ENCODE measurements at regions of chr3 and their contacts with region 1.

Region 1: DNA sequence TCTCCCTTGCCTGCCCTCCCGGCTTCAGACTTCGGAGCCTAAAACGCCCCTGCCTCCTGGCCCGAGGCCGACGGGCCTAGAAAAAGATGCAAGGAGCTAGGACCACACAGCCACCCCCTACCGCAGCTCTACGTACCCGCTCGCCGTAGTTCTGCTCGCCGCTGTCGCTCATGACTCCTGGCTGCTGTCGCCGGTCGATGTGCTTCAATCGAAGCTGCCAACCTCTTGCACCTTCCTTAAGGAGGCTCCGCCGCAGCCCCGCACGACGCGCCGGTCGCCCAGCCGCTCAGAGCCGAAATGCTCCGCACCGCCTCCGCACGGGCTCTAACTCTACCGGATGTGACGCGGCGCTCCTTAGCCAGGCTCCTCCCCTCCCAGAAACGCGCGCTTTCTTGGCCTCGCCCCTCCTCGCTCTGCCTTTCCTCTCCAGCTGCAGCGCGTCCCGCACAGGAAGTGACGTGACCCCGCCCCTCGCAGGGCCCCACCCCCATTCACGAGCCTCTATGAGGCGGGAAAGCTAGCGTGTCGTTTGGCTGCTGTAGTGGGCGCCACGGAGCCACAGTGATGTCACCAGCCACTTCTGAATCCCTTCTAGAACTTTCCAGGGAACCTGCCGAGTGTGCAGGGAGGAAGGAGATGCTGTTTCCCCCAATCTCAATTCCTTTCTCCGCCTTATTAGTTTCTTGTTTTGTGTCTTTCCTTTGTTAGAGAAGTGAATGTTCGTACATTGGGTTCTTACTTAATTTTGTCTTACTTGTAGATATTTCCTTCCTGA is at the start of gene TRA2B:
- DNase-seq: peak; percentile 91
- ATAC-seq: peak; percentile 96
- H3K4me3 ChIP-seq: peak within 1 kb of the TSS; percentile 79 to 94
- H3K27ac ChIP-seq: peak within 1 kb of the TSS; percentile 99
- H3K4me1 ChIP-seq: peaks cover 14% of the 10 kb centered on the region
- H3K27me3 ChIP-seq: no peaks in the 10 kb centered on the region
- CTCF ChIP-seq: peak; percentile 47
- total RNA-seq, gene TRA2B: 171 TPM

Region 2: DNA sequence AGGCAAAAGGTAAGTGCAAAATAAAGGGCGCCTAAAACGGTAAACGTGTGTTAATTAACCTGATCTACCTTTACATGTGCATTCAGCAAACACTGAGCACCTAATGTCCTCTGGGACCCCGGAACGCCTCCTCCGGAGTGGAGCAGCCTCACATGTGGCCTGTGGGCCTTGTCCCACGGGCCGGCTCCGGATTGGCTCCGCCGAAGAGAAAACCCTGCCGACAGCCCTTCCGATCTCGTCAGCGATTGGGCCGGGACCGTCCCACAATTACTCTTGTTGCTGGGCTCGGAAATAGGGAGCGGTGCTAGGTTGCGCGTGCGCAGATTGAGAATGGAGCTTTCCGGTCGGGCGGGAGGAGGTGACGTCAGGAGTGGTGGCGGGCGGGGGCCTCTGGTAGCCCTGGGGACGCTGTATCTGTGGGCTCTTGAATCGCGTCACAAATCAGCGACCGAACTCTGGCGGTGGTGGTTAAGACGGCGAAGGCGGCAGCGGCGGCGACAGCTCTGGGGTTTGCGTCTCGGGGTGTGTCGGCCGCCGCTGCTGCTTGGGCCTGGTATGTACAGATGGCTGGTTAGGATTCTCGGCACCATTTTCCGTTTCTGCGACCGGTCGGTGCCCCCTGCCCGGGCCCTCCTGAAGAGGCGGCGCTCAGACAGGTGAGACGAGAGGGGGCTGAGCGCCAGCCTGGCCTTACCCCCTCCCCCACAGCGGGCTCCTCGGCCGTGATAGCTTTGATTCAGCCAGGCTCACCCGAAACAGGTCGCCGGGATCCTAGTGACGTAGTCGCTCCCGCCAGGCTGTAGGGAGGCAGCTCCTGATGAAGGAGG is 351.8 kb before region 1 on chr3 and contains the start of gene SENP2:
- CTCF ChIA-PET with region 1: no interaction called
- POLR2A ChIA-PET with region 1: no interaction called
- in situ Hi-C with region 1: no loop called
- intact Hi-C with region 1: no loop called
- DNase-seq: peak; percentile 98
- ATAC-seq: peak; percentile 100
- H3K4me3 ChIP-seq: peak within 1 kb of the TSS; percentile 85 to 86
- H3K27ac ChIP-seq: peak within 1 kb of the TSS; percentile 82
- H3K4me1 ChIP-seq: peaks cover 4% of the 10 kb centered on the region; the same call in 1 of the 2 replicates
- H3K27me3 ChIP-seq: no peaks in the 10 kb centered on the region
- CTCF ChIP-seq: no peak
- total RNA-seq, gene SENP2: 52.7 TPM

Region 3: GRCh38 chr3:185796431-185797107 is 141.3 kb before region 1 on chr3:
- CTCF ChIA-PET with region 1: no interaction called
- POLR2A ChIA-PET with region 1: interaction called, 11 read pairs
- in situ Hi-C with region 1: no loop called
- intact Hi-C with region 1: no loop called
- DNase-seq: peak; percentile 94
- ATAC-seq: peak; percentile 97
- H3K4me3 ChIP-seq: peak overlapping the region in 1 of 2 experiments; percentile 6; a peak in 1 of 4 replicates
- H3K27ac ChIP-seq: peak overlapping the region; percentile 70; the same call in 1 of the 2 replicates
- H3K4me1 ChIP-seq: peaks cover 49% of the 10 kb centered on the region
- H3K27me3 ChIP-seq: no peaks in the 10 kb centered on the region
- CTCF ChIP-seq: no peak

Region 4: DNA sequence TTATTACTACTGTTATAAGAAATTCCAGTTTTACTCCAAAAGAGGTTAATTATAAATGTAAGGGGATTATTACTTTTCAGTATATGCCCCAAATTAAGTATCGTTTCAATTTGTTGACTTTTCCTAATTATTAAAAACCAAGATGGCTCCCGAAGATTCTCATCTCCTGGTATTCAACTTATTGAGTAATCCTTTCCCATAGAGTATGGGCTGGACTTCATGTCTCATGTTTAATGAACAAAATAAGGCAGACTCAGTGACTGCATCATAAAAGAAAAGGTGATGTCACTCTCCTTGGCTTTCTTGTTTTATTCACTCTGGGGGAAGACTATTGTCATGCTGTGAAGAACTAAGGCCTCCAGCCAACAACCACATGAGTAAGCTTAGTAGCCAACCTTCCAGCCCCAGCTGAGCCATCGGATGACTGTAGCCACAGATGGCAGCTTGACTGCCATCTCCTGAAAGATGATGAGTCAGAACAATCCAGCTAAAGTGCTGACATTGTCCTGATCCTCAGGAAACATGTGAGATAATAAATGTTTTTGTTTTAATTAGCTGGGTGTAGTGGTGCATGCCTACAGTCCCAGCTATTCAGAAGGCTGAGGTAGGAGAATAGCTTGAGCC is 130.3 kb before region 1 on chr3:
- CTCF ChIA-PET with region 1: interaction called, 3 read pairs
- POLR2A ChIA-PET with region 1: interaction called, 10 read pairs
- in situ Hi-C with region 1: no loop called
- intact Hi-C with region 1: loop called (anchors 10 kb)
- DNase-seq: no peak
- ATAC-seq: peak; percentile 76; the same call in 1 of the 2 replicates
- H3K4me3 ChIP-seq: no peak overlapping the region
- H3K27ac ChIP-seq: no peak overlapping the region
- H3K4me1 ChIP-seq: peaks cover 20% of the 10 kb centered on the region
- H3K27me3 ChIP-seq: no peaks in the 10 kb centered on the region
- CTCF ChIP-seq: no peak

Region 5: DNA sequence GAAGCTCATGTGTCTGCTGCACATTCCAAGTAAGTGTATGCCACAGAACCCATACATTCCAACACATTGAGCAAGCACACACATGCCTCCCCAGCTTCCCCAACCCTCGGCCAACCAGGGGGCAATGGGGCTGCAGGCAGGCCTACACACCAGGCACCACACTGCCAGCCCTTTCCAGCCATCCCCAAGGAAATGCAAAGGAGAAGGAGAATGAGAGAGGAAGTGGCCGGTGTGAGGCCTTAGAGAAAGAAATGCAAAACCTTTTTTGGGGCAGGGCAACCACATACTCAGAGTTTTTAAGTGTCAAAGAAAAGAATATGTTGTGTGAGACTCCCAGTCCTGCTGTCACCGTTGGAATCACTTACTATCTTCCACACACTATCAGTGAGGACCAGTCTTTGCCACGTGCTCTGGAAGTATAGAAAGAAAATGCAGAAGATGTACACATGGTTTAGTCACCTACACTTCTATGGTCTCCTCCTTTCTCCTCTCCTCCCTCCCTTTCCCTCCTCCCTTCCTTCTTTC is 124.1 kb before region 1 on chr3:
- CTCF ChIA-PET with region 1: no interaction called
- POLR2A ChIA-PET with region 1: no interaction called
- in situ Hi-C with region 1: no loop called
- intact Hi-C with region 1: loop called (anchors 10 kb)
- DNase-seq: no peak
- ATAC-seq: peak; percentile 88
- H3K4me3 ChIP-seq: peak overlapping the region in 1 of 2 experiments; percentile 2; a peak in 1 of 4 replicates
- H3K27ac ChIP-seq: peak overlapping the region; percentile 86
- H3K4me1 ChIP-seq: peaks cover 81% of the 10 kb centered on the region
- H3K27me3 ChIP-seq: no peaks in the 10 kb centered on the region
- CTCF ChIP-seq: no peak

Region 6: GRCh38 chr3:186057594-186057993 is 119.7 kb after region 1 on chr3:
- CTCF ChIA-PET with region 1: no interaction called
- POLR2A ChIA-PET with region 1: no interaction called
- in situ Hi-C with region 1: no loop called
- intact Hi-C with region 1: no loop called
- DNase-seq: no peak
- ATAC-seq: no peak
- H3K4me3 ChIP-seq: no peak overlapping the region
- H3K27ac ChIP-seq: no peak overlapping the region
- H3K4me1 ChIP-seq: no peaks in the 10 kb centered on the region
- H3K27me3 ChIP-seq: no peaks in the 10 kb centered on the region
- CTCF ChIP-seq: no peak

Measured in Panc1 (cell line).